B cell (primary cell): ENCODE measurements at regions of chr17 and their contacts with region 1.

Region 1: DNA sequence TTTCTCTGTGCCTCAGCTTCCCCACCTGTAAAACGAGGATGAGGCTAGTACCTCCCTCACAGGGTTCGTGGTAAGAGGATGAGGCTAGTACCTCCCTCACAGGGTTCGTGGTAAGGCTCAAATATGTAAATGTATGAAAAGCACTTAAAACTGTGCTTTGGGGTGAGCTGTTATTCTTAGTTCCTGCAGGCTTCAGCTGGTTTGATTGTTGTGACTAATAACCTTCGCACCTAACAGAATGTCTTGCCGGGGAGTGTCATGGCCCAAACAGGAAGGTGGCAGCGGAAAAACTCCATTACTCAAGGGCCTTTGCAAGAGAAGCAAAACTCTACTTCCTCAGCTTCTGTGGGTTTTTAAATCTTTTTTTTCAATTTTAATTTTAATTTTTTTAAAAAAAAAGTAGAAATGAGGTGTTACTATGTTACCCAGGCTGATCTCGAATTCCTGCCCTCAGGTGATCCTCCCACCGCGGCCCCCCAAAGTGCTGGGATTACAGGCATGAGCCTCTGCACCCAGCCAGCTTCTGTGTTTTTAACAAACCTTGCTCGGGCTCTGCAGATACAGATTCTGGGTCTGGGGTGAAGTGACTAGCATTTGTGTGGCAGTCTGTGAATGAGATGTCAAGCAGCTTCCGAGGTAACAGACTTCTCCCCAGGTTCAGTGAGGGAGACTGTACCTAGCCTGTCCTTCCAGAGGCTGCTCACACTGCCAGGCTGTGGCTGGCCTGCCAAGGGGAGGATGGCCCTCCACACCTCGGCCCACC is 103.0 kb downstream of the RAB11FIP4 start:
- DNase-seq: peak; percentile 83
- ATAC-seq: peak; percentile 61
- H3K4me3 ChIP-seq: peak overlapping the region in 4 of 5 experiments; percentile 10 to 41 (median 18)
- H3K4me3 Mint-ChIP-seq: peak overlapping the region; percentile 83
- H3K27ac ChIP-seq: peak overlapping the region; percentile 80 to 90
- H3K27ac Mint-ChIP-seq: peak overlapping the region; percentile 99
- H3K4me1 ChIP-seq: peaks cover 88 to 100% of the 10 kb centered on the region in 2 donors
- H3K4me1 Mint-ChIP-seq: peaks cover 93% of the 10 kb centered on the region
- H3K27me3 ChIP-seq: no peaks in the 10 kb centered on the region
- H3K27me3 Mint-ChIP-seq: no peaks in the 10 kb centered on the region
- CTCF ChIP-seq: no peak

Region 2: DNA sequence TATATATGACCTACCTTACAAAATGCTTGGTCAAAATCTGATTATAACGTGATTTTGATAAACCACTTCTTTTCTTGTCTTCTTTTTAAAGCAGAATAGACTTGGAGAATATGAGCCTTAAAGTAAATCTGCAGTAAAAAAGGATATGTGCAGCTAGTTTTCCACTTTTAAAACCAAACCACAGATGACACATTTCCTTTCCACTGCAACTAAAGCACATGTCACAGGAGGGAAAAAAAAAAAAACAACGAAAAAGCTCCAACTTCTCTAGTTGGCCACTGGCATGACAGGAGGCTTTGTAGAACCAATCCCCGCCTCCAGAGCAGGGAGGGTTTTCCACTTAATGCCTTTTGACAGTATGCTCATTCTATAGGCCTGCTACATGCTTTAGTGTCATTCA is 173.0 kb before region 1 on chr17 and contains the start of gene EVI2A:
- CTCF ChIA-PET with region 1: interaction called, 4 read pairs
- POLR2A ChIA-PET with region 1: no interaction called
- intact Hi-C with region 1: loop called (anchors 2 kb)
- DNase-seq: peak; percentile 81
- ATAC-seq: peak; percentile 71
- H3K4me3 ChIP-seq: peak within 1 kb of the TSS; percentile 40 to 98 (median 69)
- H3K4me3 Mint-ChIP-seq: peak within 1 kb of the TSS; percentile 87
- H3K27ac ChIP-seq: peak within 1 kb of the TSS; percentile 40 to 91
- H3K27ac Mint-ChIP-seq: peak within 1 kb of the TSS; percentile 69
- H3K4me1 ChIP-seq: peaks cover 19 to 32% of the 10 kb centered on the region in 2 donors
- H3K4me1 Mint-ChIP-seq: peaks cover 37% of the 10 kb centered on the region
- H3K27me3 ChIP-seq: no peaks in the 10 kb centered on the region
- H3K27me3 Mint-ChIP-seq: no peaks in the 10 kb centered on the region
- CTCF ChIP-seq: no peak
- total RNA-seq, gene EVI2A: 47.3 and 49.3 TPM in 2 replicates

Region 3: DNA sequence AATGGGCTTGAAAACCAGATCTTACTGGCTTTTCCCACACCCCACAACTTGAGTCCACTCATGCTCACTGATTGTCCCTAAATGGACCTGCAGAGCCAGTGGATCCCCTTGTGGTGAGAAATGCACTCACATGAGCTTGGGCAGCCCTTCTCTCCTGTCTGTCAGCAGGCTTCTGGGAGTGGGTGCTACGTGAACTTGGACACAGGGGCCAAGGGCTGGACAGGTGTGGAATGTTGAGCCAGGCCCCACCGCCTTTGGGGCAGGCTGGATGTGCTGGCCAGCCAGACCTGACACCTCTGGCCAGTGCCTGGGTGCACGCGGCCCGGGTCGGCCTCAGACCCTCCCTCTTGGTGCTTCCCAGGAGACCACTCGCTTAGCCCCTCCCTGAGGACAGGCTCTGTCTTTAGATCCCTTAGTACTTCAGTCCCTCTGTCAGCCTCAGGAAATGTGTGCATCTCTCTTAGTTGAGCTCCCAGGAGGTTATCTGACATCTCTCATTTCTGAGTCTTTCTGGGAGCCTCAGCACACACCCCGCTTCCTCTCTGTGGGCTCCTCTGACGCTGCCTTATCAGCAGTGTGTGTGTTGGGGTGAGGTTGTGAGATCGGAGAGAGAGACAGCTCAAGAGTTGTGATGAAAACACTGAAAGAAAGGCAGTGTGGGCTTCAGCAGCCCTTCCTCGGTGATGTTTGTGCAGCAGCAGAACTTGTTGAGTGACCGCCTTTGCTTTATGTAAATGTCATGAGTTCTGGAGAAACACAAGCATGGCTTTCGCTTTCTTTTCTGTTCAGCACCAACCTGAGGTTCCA is 14.1 kb after region 1 on chr17:
- CTCF ChIA-PET with region 1: interaction called, 94 read pairs
- POLR2A ChIA-PET with region 1: interaction called, 34 read pairs
- intact Hi-C with region 1: loop called (anchors 1 kb)
- DNase-seq: peak; percentile 79
- ATAC-seq: peak; percentile 81
- H3K4me3 ChIP-seq: peak overlapping the region; percentile 24 to 65 (median 38)
- H3K4me3 Mint-ChIP-seq: peak overlapping the region; percentile 94
- H3K27ac ChIP-seq: peak overlapping the region; percentile 83 to 89
- H3K27ac Mint-ChIP-seq: peak overlapping the region; percentile 96
- H3K4me1 ChIP-seq: peaks cover 49 to 56% of the 10 kb centered on the region in 2 donors
- H3K4me1 Mint-ChIP-seq: peaks cover 61% of the 10 kb centered on the region
- H3K27me3 ChIP-seq: no peaks in the 10 kb centered on the region
- H3K27me3 Mint-ChIP-seq: no peaks in the 10 kb centered on the region
- CTCF ChIP-seq: peak; percentile 67

Region 4: GRCh38 chr17:31524926-31525800 is 30.7 kb after region 1 on chr17:
- CTCF ChIA-PET with region 1: interaction called, 44 read pairs
- POLR2A ChIA-PET with region 1: no interaction called
- intact Hi-C with region 1: no loop called
- DNase-seq: peak; percentile 86
- ATAC-seq: peak; percentile 79
- H3K4me3 ChIP-seq: no peak overlapping the region
- H3K4me3 Mint-ChIP-seq: no peak overlapping the region
- H3K27ac ChIP-seq: no peak overlapping the region
- H3K27ac Mint-ChIP-seq: peak overlapping the region; percentile 65
- H3K4me1 ChIP-seq: peaks cover 0 to 13% of the 10 kb centered on the region in 2 donors
- H3K4me1 Mint-ChIP-seq: peaks cover 9% of the 10 kb centered on the region
- H3K27me3 ChIP-seq: no peaks in the 10 kb centered on the region
- H3K27me3 Mint-ChIP-seq: no peaks in the 10 kb centered on the region
- CTCF ChIP-seq: peak; percentile 89

Region 5: DNA sequence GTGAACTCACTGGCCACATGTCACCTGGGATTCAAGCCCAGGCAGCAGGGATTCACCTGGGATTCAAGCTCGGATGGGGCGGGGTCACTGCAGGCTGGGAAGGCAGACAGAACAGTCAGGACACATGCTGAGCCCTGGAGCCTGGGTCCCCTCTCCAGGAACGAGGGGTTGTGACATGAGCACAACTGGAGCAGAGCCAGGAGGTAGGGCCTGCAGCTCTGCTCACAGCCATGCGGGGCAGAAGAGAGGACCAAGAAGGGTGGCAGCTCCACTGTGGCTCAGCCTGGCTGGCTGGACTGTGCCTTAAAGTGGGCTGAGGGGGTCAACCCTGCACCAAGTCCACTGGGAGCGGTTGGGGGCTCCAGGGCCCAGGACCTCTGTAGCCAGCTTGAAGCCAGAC is 47.1 kb after region 1 on chr17:
- CTCF ChIA-PET with region 1: interaction called, 3 read pairs
- POLR2A ChIA-PET with region 1: interaction called, 7 read pairs
- intact Hi-C with region 1: loop called (anchors 1 kb)
- DNase-seq: no peak
- ATAC-seq: no peak
- H3K4me3 ChIP-seq: no peak overlapping the region
- H3K4me3 Mint-ChIP-seq: no peak overlapping the region
- H3K27ac ChIP-seq: no peak overlapping the region
- H3K27ac Mint-ChIP-seq: peak overlapping the region; percentile 74
- H3K4me1 ChIP-seq: peaks cover 42 to 48% of the 10 kb centered on the region in 2 donors
- H3K4me1 Mint-ChIP-seq: peaks cover 52% of the 10 kb centered on the region
- H3K27me3 ChIP-seq: no peaks in the 10 kb centered on the region
- H3K27me3 Mint-ChIP-seq: no peaks in the 10 kb centered on the region
- CTCF ChIP-seq: no peak